B cell (primary cell): ENCODE measurements at regions of chr12 and their contacts with region 1.

Region 1: DNA sequence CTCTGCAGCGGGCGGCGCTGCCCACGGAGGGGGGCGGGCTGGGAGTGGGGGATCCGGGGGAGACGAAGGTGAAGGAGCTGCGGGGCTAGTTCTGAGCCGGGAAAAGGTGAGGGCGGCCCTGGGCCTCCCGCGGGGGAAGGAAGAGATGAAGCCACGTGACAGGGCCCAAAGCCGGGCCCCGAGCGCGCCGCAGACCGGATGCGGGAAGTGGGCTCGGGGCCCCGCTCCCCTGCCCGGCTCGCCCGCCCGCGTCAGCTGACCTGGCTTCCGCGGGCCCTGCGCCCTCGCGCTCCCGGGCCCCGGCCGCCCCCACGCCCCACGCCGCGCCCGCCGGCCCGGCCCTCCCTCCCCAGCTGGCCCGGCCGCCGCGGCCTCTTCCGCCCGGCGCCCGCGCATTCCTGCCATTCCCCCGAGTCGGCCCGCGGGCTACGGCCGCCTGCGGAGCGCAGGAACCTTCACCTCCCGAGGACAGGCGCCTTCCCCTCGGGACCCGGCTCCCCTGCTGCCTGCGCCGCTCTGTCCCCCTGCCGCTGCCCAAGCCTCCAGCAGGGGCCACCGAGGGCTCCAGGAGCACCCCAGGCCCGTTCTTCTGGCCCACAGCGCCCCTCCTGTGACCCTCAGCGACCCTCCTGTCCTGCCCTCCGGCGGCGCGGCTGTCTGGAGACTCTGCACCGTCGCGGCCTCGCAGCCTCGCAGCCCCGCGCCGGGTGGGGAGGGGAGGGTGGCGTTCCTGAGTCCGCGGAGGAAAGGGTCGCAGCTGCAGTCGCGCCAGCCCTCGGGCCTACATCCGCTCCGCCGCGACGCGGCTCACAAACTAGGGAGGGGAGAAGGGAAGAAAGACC is 20.4 kb downstream of the NINJ2 start:
- DNase-seq: peak; percentile 86
- ATAC-seq: peak; percentile 75
- H3K4me3 ChIP-seq: peak overlapping the region; percentile 56 to 80 (median 78)
- H3K4me3 Mint-ChIP-seq: peak overlapping the region; percentile 89
- H3K27ac ChIP-seq: peak overlapping the region; percentile 94 to 96
- H3K27ac Mint-ChIP-seq: peak overlapping the region; percentile 99
- H3K4me1 ChIP-seq: peaks cover 28 to 43% of the 10 kb centered on the region in 2 donors
- H3K4me1 Mint-ChIP-seq: peaks cover 51% of the 10 kb centered on the region
- H3K27me3 ChIP-seq: no peaks in the 10 kb centered on the region
- H3K27me3 Mint-ChIP-seq: no peaks in the 10 kb centered on the region
- CTCF ChIP-seq: peak; percentile 43

Region 2: DNA sequence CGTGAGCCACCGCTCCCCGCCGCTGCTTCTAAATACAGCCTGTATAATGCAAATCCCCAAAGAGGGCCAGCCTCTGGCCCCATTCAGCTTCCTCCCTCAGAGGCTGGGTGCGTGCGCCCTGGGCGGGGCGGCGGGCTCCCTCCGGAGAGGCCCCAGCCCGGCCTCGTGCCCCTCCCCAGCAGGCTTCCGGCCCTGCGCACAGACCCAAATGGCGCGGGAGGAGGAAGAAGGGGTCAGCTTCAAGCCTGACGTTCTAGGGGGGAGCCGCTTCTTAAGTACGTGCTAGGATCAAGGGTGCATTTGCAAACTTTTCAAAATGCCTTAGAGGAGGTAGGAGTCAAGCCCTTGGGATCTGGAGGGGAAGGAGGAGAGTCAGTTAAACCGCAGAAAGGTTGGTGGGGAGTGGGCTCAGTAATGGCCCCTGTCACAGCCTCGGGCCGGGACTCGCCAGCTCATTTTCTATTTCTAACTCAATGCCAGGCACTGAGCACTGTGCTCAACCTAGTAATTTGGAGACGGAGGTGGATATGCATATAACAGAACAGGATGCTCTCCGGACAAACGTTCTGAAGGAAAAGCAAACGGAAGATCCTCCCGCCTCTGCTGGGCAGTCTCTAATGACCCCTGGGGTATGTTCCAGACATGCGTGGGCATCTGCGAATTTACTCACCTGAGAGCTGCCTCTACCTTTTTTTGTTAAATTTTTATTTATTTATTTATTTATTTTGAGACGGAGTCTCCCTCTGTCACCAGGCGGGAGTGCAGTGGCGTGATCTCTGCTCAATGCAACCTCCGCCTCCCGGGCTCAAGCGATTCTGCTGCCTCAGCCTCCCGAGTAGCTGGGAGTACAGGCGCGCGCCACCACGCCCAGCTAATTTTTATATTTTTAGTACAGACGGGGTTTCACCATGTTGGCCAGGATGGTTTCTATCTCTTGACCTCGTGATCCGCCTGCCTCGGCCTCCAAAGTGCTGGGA is 11.9 kb before region 1 on chr12:
- CTCF ChIA-PET with region 1: no interaction called
- POLR2A ChIA-PET with region 1: interaction called, 4 read pairs
- intact Hi-C with region 1: loop called (anchors 1 kb)
- DNase-seq: peak; percentile 51
- ATAC-seq: peak; percentile 82
- H3K4me3 ChIP-seq: peak overlapping the region; percentile 51 to 79 (median 66)
- H3K4me3 Mint-ChIP-seq: peak overlapping the region; percentile 80
- H3K27ac ChIP-seq: peak overlapping the region; percentile 83 to 93
- H3K27ac Mint-ChIP-seq: peak overlapping the region; percentile 91
- H3K4me1 ChIP-seq: peaks cover 4 to 32% of the 10 kb centered on the region in 2 donors
- H3K4me1 Mint-ChIP-seq: peaks cover 38% of the 10 kb centered on the region
- H3K27me3 ChIP-seq: no peaks in the 10 kb centered on the region
- H3K27me3 Mint-ChIP-seq: no peaks in the 10 kb centered on the region
- CTCF ChIP-seq: no peak

Region 3: DNA sequence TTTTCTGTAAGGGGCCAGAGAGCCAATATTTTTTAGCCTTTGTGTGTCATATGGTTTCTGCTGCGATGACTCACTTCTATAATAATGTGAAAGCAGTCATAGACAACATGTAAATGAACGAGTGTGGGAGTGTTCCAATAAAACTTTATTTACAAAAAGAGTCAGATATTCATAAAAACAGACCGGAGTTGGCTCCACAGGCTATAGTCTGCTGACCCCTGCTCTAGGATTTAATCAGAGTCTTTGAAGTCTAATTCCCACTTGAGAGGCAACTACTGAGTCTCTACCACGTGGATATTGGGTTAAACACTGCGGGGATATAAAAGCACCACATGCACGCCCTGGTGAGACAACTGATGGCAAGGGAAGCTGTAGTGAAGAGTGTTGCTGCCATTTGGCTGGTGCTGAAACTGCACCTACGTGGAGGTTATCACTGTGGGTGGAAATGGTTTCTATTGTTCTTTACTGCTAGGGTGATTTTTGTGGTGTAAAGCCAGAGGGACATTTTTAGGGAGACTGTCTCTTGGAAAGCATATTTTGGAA is 24.0 kb after region 1 on chr12:
- CTCF ChIA-PET with region 1: interaction called, 3 read pairs
- POLR2A ChIA-PET with region 1: interaction called, 6 read pairs
- intact Hi-C with region 1: loop called (anchors 2 kb)
- DNase-seq: no peak
- ATAC-seq: no peak
- H3K4me3 ChIP-seq: no peak overlapping the region
- H3K4me3 Mint-ChIP-seq: peak overlapping the region; percentile 54
- H3K27ac ChIP-seq: no peak overlapping the region
- H3K27ac Mint-ChIP-seq: peak overlapping the region; percentile 12
- H3K4me1 ChIP-seq: peaks cover 25 to 32% of the 10 kb centered on the region in 2 donors
- H3K4me1 Mint-ChIP-seq: peaks cover 45% of the 10 kb centered on the region
- H3K27me3 ChIP-seq: no peaks in the 10 kb centered on the region
- H3K27me3 Mint-ChIP-seq: no peaks in the 10 kb centered on the region
- CTCF ChIP-seq: no peak

Region 4: GRCh38 chr12:718756-719102 is 75.9 kb after region 1 on chr12:
- CTCF ChIA-PET with region 1: interaction called, 3 read pairs
- POLR2A ChIA-PET with region 1: no interaction called
- intact Hi-C with region 1: loop called (anchors 2 kb)
- DNase-seq: no peak
- ATAC-seq: no peak
- H3K4me3 ChIP-seq: peak overlapping the region in 1 of 5 experiments; percentile 23
- H3K4me3 Mint-ChIP-seq: peak overlapping the region; percentile 87
- H3K27ac ChIP-seq: peak overlapping the region; percentile 31 to 78
- H3K27ac Mint-ChIP-seq: peak overlapping the region; percentile 97
- H3K4me1 ChIP-seq: peaks cover 14 to 17% of the 10 kb centered on the region in 2 donors
- H3K4me1 Mint-ChIP-seq: peaks cover 24% of the 10 kb centered on the region
- H3K27me3 ChIP-seq: no peaks in the 10 kb centered on the region
- H3K27me3 Mint-ChIP-seq: no peaks in the 10 kb centered on the region
- CTCF ChIP-seq: no peak

Region 5: DNA sequence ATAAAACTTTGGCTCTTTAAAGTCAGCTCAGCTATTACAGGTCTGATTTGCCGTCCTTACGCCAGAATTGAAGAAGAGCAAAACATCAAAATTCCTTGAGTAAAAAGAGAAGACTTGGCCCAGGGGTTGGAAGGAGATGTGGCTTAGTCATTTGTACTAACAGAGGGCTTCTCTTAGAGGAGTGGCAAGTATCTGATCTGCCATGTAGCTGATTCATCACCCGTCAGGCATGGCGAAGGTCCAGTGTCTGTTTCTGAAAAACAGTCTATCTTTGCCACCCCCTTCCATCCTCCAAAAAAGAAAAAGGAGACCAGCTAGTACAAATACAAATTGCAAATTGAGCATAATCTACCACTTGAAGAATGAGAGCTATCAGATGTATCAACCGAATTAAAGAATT is 214.8 kb after region 1 on chr12:
- CTCF ChIA-PET with region 1: no interaction called
- POLR2A ChIA-PET with region 1: no interaction called
- intact Hi-C with region 1: no loop called
- DNase-seq: no peak
- ATAC-seq: no peak
- H3K4me3 ChIP-seq: no peak overlapping the region
- H3K4me3 Mint-ChIP-seq: no peak overlapping the region
- H3K27ac ChIP-seq: no peak overlapping the region
- H3K27ac Mint-ChIP-seq: no peak overlapping the region
- H3K4me1 ChIP-seq: no peaks in the 10 kb centered on the region
- H3K4me1 Mint-ChIP-seq: no peaks in the 10 kb centered on the region
- H3K27me3 ChIP-seq: no peaks in the 10 kb centered on the region
- H3K27me3 Mint-ChIP-seq: no peaks in the 10 kb centered on the region
- CTCF ChIP-seq: no peak

Region 6: GRCh38 chr12:1013618-1014489 is 371.0 kb after region 1 on chr12:
- CTCF ChIA-PET with region 1: no interaction called
- POLR2A ChIA-PET with region 1: no interaction called
- intact Hi-C with region 1: no loop called
- DNase-seq: no peak
- ATAC-seq: no peak
- H3K4me3 ChIP-seq: no peak overlapping the region
- H3K4me3 Mint-ChIP-seq: no peak overlapping the region
- H3K27ac ChIP-seq: no peak overlapping the region
- H3K27ac Mint-ChIP-seq: no peak overlapping the region
- H3K4me1 ChIP-seq: no peaks in the 10 kb centered on the region
- H3K4me1 Mint-ChIP-seq: no peaks in the 10 kb centered on the region
- H3K27me3 ChIP-seq: no peaks in the 10 kb centered on the region
- H3K27me3 Mint-ChIP-seq: no peaks in the 10 kb centered on the region
- CTCF ChIP-seq: no peak